ENCODE measurements at regions of chr7 and their contacts with region 1.

Region 1: DNA sequence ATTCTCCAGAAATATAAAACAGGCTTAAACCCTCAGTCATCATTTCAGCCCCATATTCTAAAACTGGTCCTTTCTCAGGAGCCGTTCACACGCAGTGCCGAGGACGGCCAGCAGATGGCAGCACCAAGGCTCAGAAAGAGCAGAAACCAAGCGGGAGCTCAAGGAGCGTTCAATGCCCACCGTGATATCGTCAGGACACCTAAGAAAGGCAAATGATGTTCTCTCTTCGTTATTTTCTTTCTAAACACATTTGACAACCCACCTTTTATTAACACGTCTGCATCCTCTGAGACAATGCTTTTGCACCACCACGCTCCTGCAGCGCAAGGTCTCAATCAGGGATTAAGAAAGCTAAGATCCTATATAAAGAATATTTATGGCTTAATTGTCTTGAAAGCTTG is 45.7 kb upstream of the RBM33 start:
- DNase-seq: peak; percentile 91
- ATAC-seq: peak; percentile 78
- H3K4me3 Mint-ChIP-seq: no peak overlapping the region
- H3K27ac Mint-ChIP-seq: no peak overlapping the region
- H3K4me1 Mint-ChIP-seq: peaks cover 9% of the 10 kb centered on the region
- H3K27me3 Mint-ChIP-seq: peaks cover 27% of the 10 kb centered on the region

Region 2: GRCh38 chr7:155555116-155555695 is 43.6 kb before region 1 on chr7:
- CTCF ChIA-PET with region 1: no interaction called
- POLR2A ChIA-PET with region 1: no interaction called
- intact Hi-C with region 1: no loop called
- DNase-seq: no peak
- ATAC-seq: no peak
- H3K4me3 Mint-ChIP-seq: no peak overlapping the region
- H3K27ac Mint-ChIP-seq: no peak overlapping the region
- H3K4me1 Mint-ChIP-seq: no peaks in the 10 kb centered on the region
- H3K27me3 Mint-ChIP-seq: peaks cover 5% of the 10 kb centered on the region

Region 3: DNA sequence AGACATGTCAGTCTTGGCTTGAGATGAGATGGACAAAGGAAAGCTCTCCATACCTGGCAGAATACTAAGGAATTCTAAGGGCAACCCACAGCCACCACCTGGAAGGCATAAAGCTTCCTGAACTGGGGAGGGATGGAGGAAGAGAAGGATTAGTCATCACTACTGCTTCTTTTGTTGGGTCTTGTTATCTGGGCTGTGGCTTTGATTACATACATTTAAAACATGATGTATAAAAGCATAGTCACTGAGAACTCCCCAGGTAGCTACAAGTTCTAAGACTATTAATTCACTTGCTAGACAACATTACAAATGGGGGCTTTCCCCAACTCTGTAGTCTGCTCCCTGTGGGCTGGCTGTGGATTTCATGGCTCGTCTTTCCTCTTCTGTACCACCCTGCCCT is 103.8 kb after region 1 on chr7:
- CTCF ChIA-PET with region 1: interaction called, 11 read pairs
- POLR2A ChIA-PET with region 1: no interaction called
- intact Hi-C with region 1: no loop called
- DNase-seq: no peak
- ATAC-seq: peak; percentile 19
- H3K4me3 Mint-ChIP-seq: no peak overlapping the region
- H3K27ac Mint-ChIP-seq: peak overlapping the region; percentile 45
- H3K4me1 Mint-ChIP-seq: peaks cover 25% of the 10 kb centered on the region
- H3K27me3 Mint-ChIP-seq: no peaks in the 10 kb centered on the region

Region 4: DNA sequence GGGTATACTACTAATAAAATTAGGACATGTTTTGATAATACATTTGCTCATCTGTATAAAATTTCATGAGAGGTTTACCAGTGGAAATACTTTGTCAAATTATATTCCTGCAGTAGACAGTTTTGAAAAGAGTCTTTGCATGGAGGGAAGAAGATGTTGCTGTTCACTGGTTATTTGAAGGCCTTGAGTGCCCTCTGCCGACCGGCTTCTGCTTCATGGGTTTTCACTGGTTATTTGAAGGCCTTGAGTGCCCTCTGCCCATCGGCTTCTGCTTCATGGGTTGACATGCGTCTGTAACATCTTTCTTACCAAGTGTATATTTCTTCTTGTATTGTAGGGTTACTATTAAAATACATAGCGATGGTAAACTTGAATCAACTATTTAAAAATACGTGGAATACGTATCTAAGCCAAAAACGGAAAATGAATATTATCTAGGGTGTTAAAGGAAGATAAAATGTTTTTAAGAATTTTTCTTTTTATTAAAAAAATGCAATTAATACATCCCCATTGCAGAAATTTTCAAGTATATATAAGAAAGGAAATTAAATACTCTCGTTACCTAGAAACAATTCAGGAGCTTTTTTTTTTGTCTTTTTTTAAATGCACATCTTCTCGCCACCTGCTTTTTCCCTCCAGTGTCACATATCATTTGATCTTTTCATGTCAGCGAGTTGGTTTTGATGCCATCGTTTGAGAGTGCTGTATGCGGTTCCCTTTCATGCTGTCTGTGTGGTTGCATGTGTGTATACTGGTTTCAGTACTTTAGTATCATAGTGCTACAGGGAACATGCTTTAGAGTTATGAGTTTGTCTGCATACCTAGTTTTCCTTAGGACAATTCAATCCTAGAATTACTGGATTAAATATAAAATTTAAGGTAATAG is 140.1 kb after region 1 on chr7:
- CTCF ChIA-PET with region 1: interaction called, 52 read pairs
- POLR2A ChIA-PET with region 1: no interaction called
- intact Hi-C with region 1: loop called (anchors 1 kb)
- DNase-seq: peak; percentile 85
- ATAC-seq: peak; percentile 68
- H3K4me3 Mint-ChIP-seq: peak overlapping the region; percentile 21
- H3K27ac Mint-ChIP-seq: peak overlapping the region; percentile 72
- H3K4me1 Mint-ChIP-seq: peaks cover 64% of the 10 kb centered on the region
- H3K27me3 Mint-ChIP-seq: no peaks in the 10 kb centered on the region

Region 5: DNA sequence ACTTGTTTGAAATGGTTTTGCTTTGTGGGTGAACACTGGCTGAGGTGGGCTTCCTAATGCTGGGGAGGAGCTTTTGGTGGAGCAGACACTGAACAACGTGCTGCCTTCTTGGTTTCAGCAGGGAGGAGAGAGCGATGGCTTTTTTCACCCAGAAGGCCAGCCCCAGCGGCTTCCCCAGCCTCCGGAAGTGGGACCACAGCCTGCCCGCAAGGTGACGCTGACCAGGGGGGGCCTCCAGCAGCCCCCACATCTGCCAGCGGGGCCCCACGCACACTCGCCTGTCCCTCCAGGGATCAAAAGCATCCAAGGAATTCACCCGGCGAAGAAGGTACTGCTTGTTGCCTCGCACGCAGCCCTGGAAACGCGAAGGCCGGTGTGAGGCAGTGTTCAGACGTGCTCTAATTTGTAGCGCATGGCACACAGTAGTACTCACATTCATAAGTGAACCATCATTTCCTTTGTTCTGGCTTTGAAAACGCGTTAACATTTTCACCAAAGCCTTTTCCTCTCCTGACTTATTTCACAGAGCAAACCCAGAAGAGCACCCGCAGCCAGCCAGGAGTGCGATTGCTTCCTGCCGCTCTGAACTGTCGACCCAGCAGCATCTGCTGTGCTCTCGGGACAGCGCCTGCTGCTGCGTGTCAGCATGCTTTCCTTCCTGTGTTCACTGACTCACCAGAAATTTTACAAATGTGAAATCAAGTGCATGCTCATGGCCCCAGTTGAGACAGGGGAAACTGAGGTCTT is 165.1 kb after region 1 on chr7:
- CTCF ChIA-PET with region 1: interaction called, 101 read pairs
- POLR2A ChIA-PET with region 1: no interaction called
- intact Hi-C with region 1: loop called (anchors 1 kb)
- DNase-seq: peak; percentile 84
- ATAC-seq: peak; percentile 83
- H3K4me3 Mint-ChIP-seq: peak overlapping the region; percentile 74
- H3K27ac Mint-ChIP-seq: peak overlapping the region; percentile 97
- H3K4me1 Mint-ChIP-seq: peaks cover 52% of the 10 kb centered on the region
- H3K27me3 Mint-ChIP-seq: no peaks in the 10 kb centered on the region

Region 6: GRCh38 chr7:155778349-155778748 is 179.5 kb after region 1 on chr7:
- CTCF ChIA-PET with region 1: interaction called, 10 read pairs
- POLR2A ChIA-PET with region 1: no interaction called
- intact Hi-C with region 1: no loop called
- DNase-seq: no peak
- ATAC-seq: no peak
- H3K4me3 Mint-ChIP-seq: no peak overlapping the region
- H3K27ac Mint-ChIP-seq: no peak overlapping the region
- H3K4me1 Mint-ChIP-seq: no peaks in the 10 kb centered on the region
- H3K27me3 Mint-ChIP-seq: no peaks in the 10 kb centered on the region

Measured in activated CD4-positive, alpha-beta T cell treated with anti-CD3 and anti-CD28 coated beads for 36 hours (primary cell).